Activated B cell treated with CpG ODN at 0.5 μM for 24 hours (primary cell): ENCODE measurements at regions of chr14 and their contacts with region 1.

Region 1: GRCh38 chr14:47278234-47278842 is 397.1 kb downstream of the MDGA2 start:
- DNase-seq: no peak
- ATAC-seq: no peak
- H3K4me3 Mint-ChIP-seq: no peak overlapping the region
- H3K27ac Mint-ChIP-seq: no peak overlapping the region
- H3K4me1 Mint-ChIP-seq: no peaks in the 10 kb centered on the region
- H3K27me3 Mint-ChIP-seq: no peaks in the 10 kb centered on the region
- CTCF ChIP-seq: no peak

Region 2: DNA sequence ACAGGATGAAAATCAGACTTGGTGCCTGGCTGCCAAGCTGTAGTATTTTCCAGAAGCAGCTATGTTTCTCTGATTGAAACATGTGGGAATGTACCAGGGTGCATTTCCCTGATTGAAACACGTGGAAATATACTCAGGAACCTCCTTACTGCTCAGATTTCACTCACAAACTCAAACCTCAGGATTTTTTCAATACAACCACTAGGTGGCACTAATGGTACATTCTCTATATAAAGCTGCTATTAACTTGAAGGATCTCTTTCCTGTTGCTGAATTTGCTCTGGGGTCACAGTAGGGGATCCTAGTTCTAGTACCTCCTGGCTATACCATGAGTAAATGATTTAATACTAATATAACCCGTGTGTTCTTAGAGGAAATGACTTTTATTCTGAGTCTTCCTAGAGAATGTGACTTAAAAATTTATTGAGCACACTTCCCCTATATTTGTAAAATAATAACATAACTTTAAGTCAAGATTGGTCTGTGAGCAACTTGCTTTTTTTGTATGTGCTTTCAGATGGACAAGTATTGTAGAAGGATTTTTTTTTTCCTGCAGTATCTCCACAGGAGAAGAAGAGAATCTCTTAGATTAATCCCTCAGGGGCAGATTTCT is 1851.6 kb before region 1 on chr14:
- CTCF ChIA-PET with region 1: no interaction called
- POLR2A ChIA-PET with region 1: no interaction called
- intact Hi-C with region 1: loop called (anchors 5 kb)
- DNase-seq: no peak
- ATAC-seq: no peak
- H3K4me3 Mint-ChIP-seq: no peak overlapping the region
- H3K27ac Mint-ChIP-seq: no peak overlapping the region
- H3K4me1 Mint-ChIP-seq: no peaks in the 10 kb centered on the region
- H3K27me3 Mint-ChIP-seq: no peaks in the 10 kb centered on the region
- CTCF ChIP-seq: peak; percentile 69

Region 3: GRCh38 chr14:45673420-45673819 is 1604.9 kb before region 1 on chr14:
- CTCF ChIA-PET with region 1: no interaction called
- POLR2A ChIA-PET with region 1: no interaction called
- intact Hi-C with region 1: no loop called
- DNase-seq: no peak
- ATAC-seq: no peak
- H3K4me3 Mint-ChIP-seq: no peak overlapping the region
- H3K27ac Mint-ChIP-seq: no peak overlapping the region
- H3K4me1 Mint-ChIP-seq: no peaks in the 10 kb centered on the region
- H3K27me3 Mint-ChIP-seq: no peaks in the 10 kb centered on the region
- CTCF ChIP-seq: no peak